Common myeloid progenitor, CD34-positive (primary cell): ENCODE measurements at regions of chr22 and their contacts with region 1.

Region 1: GRCh38 chr22:31148953-31149627 is 8.8 kb upstream of the PLA2G3 start:
- DNase-seq: peak; percentile 64 to 76 (median 72)
- H3K4me3 ChIP-seq: no peak overlapping the region
- H3K27ac ChIP-seq: no peak overlapping the region
- H3K4me1 ChIP-seq: peaks cover 0 to 3% (median 1%) of the 10 kb centered on the region in 4 experiments
- H3K27me3 ChIP-seq: no peaks in the 10 kb centered on the region

Region 2: DNA sequence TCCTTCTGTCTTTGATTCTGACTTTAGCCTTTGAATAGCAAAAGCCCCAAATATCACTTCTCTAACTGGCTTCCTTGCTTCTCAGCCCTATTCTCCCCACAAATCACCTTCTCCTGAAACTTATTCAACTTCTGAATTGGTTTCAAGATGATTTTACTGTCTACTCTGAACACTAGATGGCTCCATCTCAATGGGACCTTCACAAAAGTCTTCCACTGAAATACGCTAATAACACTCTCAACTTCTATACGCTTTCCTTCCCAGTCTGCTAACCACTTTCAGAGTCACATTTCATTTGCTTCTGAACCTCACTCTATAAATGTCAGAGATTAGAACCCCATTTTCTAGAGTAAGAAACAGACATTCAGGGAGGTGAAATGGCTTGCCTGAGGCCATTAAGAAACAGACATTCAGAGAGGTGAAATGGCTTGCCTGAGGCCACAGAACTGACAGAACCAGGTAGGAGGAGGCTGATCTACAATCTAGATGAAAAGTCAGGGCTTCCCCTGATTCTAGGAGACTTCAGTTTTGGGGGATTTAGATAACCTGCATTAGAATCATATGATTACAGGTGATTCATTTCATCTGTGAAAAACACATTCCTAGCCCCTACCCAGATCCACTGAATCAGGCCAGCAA is 201.2 kb before region 1 on chr22:
- CTCF ChIA-PET with region 1: interaction called, 20 read pairs
- POLR2A ChIA-PET with region 1: no interaction called
- DNase-seq: peak; percentile 52 to 71 (median 68)
- H3K4me3 ChIP-seq: no peak overlapping the region
- H3K27ac ChIP-seq: no peak overlapping the region
- H3K4me1 ChIP-seq: peaks cover 0 to 11% (median 3%) of the 10 kb centered on the region in 4 experiments
- H3K27me3 ChIP-seq: no peaks in the 10 kb centered on the region

Region 3: GRCh38 chr22:31062566-31063230 is 86.4 kb before region 1 on chr22:
- CTCF ChIA-PET with region 1: no interaction called
- POLR2A ChIA-PET with region 1: no interaction called
- DNase-seq: no peak
- H3K4me3 ChIP-seq: no peak overlapping the region
- H3K27ac ChIP-seq: no peak overlapping the region
- H3K4me1 ChIP-seq: peaks cover 0 to 11% (median 1%) of the 10 kb centered on the region in 4 experiments
- H3K27me3 ChIP-seq: no peaks in the 10 kb centered on the region

Region 4: GRCh38 chr22:31080848-31081649 is 68.0 kb before region 1 on chr22 and contains the start of gene SMTN:
- CTCF ChIA-PET with region 1: interaction called, 10 read pairs
- POLR2A ChIA-PET with region 1: no interaction called
- DNase-seq: peak; percentile 87 to 91 (median 89)
- H3K4me3 ChIP-seq: peak within 1 kb of the TSS; percentile 67 to 88 (median 86)
- H3K27ac ChIP-seq: peak within 1 kb of the TSS; percentile 72 to 79
- H3K4me1 ChIP-seq: peaks cover 2 to 49% (median 45%) of the 10 kb centered on the region in 4 experiments
- H3K27me3 ChIP-seq: no peaks in the 10 kb centered on the region

Region 5: GRCh38 chr22:31160328-31160978 is 11.4 kb after region 1 on chr22:
- CTCF ChIA-PET with region 1: interaction called, 12 read pairs
- POLR2A ChIA-PET with region 1: interaction called, 3 read pairs
- DNase-seq: peak in 1 of 3 donors; percentile 15
- H3K4me3 ChIP-seq: peak overlapping the region; percentile 79 to 97 (median 85)
- H3K27ac ChIP-seq: peak overlapping the region; percentile 25 to 82
- H3K4me1 ChIP-seq: peaks cover 14 to 32% (median 19%) of the 10 kb centered on the region in 4 experiments
- H3K27me3 ChIP-seq: no peaks in the 10 kb centered on the region